ENCODE measurements at regions of chr1 and their contacts with region 1.

Region 1: GRCh38 chr1:52702886-52703787 is 5.0 kb upstream of the COA7 start:
- DNase-seq: peak; percentile 94
- H3K4me3 ChIP-seq: peak overlapping the region; percentile 41
- H3K27ac ChIP-seq: peak overlapping the region; percentile 80
- H3K4me1 ChIP-seq: peaks cover 15% of the 10 kb centered on the region
- H3K27me3 ChIP-seq: no peaks in the 10 kb centered on the region
- CTCF ChIP-seq: no peak

Region 2: DNA sequence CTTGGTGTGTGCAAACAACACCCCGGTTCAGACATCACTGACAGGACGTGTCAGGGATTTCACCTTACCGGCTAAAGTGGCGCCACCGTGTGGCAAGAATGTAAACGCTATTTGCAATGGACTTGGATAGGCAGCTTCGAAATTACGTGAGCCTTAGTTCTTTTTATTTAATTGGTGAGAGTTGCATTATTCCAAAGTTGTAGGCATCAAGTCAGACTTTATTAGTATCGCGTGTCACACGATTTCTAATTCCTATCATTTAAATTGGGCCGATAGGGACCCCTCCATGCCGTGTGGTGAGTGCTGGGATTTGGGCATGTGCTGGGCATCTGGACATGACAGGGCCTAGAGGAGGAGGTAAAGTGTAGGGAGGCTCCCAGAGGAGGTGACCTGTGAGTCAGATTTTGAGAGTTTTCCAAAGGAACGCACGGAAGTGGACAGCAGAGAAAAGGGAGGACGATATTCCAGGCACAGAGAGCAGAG is 479.0 kb after region 1 on chr1:
- intact Hi-C with region 1: loop called (anchors 10 kb)
- DNase-seq: peak; percentile 92
- H3K4me3 ChIP-seq: no peak overlapping the region
- H3K27ac ChIP-seq: peak overlapping the region; percentile 72
- H3K4me1 ChIP-seq: peaks cover 6% of the 10 kb centered on the region
- H3K27me3 ChIP-seq: no peaks in the 10 kb centered on the region
- CTCF ChIP-seq: peak; percentile 97